Activated B cell treated with CpG ODN at 0.5 μM for 24 hours (primary cell): ENCODE measurements at regions of chr15 and their contacts with region 1.

Region 1: GRCh38 chr15:41331833-41332787 is at the start of gene OIP5:
- DNase-seq: peak; percentile 88
- ATAC-seq: peak; percentile 94
- H3K4me3 Mint-ChIP-seq: peak within 1 kb of the TSS; percentile 100
- H3K27ac Mint-ChIP-seq: peak within 1 kb of the TSS; percentile 97
- H3K4me1 Mint-ChIP-seq: peaks cover 31% of the 10 kb centered on the region
- H3K27me3 Mint-ChIP-seq: no peaks in the 10 kb centered on the region
- CTCF ChIP-seq: no peak
- total RNA-seq, gene OIP5: 0.62 and 1.4 TPM in 2 replicates

Region 2: GRCh38 chr15:41283653-41284426 is 48.3 kb before region 1 on chr15:
- CTCF ChIA-PET with region 1: interaction called, 7 read pairs
- POLR2A ChIA-PET with region 1: interaction called, 14 read pairs
- intact Hi-C with region 1: loop called (anchors 1 kb)
- DNase-seq: peak; percentile 94
- ATAC-seq: peak; percentile 98
- H3K4me3 Mint-ChIP-seq: peak overlapping the region; percentile 93
- H3K27ac Mint-ChIP-seq: peak overlapping the region; percentile 94
- H3K4me1 Mint-ChIP-seq: peaks cover 42% of the 10 kb centered on the region
- H3K27me3 Mint-ChIP-seq: no peaks in the 10 kb centered on the region
- CTCF ChIP-seq: no peak

Region 3: DNA sequence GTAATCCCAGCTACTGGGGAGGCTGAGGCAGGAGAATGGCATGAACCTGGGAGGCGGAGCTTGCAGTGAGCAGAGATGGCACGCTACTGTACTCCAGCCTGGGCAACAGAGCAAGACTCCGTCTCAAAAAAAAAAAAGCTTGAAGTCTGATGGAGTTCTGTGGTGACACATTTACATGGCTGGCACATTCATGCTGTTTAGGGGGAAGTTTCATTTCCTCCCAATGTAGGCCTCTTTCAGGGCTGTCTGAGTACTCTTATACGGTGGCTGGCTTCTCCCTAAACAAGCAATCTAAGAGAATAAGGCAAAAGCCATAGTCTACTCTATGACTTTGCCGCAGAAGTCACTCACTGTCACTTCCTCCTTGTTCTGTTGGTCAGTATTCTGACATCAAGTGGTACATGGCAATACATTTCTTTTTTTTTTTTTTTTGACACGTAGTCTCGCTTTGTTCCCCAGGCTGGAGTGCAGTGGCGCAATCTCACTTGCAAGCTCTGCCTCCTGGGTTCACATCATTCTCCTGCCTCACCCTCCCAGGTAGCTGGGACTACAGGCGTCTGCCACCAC is 41.0 kb before region 1 on chr15:
- CTCF ChIA-PET with region 1: interaction called, 7 read pairs
- POLR2A ChIA-PET with region 1: interaction called, 21 read pairs
- intact Hi-C with region 1: loop called (anchors 1 kb)
- DNase-seq: peak; percentile 25
- ATAC-seq: peak; percentile 94
- H3K4me3 Mint-ChIP-seq: peak overlapping the region; percentile 57
- H3K27ac Mint-ChIP-seq: peak overlapping the region; percentile 89
- H3K4me1 Mint-ChIP-seq: peaks cover 40% of the 10 kb centered on the region
- H3K27me3 Mint-ChIP-seq: no peaks in the 10 kb centered on the region
- CTCF ChIP-seq: no peak

Region 4: DNA sequence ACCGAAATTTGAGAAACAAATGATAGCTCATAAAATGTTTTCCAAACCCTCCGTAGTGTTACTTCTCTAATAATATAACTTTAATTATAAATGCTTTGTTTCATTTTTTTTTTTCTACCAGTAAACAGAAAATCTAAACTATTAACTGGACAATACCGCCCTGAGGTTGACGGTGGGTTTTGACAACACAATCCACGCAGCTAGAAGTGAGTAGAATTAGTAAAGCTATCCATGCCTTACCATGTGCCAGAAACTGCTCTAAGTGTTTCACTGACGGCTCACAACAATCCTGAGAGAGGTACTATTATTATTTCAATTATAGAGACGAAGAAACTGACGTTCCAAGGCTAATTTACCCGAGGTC is 69.8 kb after region 1 on chr15:
- CTCF ChIA-PET with region 1: no interaction called
- POLR2A ChIA-PET with region 1: interaction called, 3 read pairs
- intact Hi-C with region 1: loop called (anchors 1 kb)
- DNase-seq: no peak
- ATAC-seq: no peak
- H3K4me3 Mint-ChIP-seq: peak overlapping the region; percentile 93
- H3K27ac Mint-ChIP-seq: peak overlapping the region; percentile 94
- H3K4me1 Mint-ChIP-seq: peaks cover 16% of the 10 kb centered on the region
- H3K27me3 Mint-ChIP-seq: no peaks in the 10 kb centered on the region
- CTCF ChIP-seq: no peak

Region 5: DNA sequence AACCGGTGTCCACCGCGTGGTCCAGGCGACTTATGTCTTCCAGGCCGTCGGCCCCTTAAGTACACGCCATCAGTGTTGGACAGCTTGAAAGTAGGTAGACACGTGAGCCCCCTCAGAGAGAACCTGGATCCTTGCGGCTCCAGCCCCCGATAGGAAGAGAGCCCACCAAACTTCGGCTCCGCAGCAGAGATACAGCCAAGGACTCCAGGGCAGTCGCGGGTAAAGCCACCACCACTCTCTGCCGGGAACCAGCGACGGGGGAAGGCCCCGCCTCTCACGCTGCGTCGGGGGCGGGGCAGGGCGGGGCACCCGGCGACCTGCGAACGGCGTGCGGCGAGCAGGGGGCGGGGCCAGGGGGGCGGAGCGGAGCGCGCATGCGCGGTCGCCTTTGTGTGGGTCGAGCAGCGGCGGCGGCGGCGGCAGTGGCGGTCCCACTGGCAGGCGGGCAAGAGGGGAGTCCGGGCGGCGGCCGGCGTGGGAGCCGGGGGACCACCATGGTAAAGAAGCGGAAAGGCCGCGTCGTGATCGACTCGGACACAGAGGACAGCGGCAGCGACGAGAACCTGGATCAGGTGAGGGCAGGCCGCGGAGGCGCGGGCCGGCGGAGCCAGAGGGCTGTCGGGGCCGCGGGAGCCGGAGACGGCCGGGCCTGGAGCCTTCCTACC is 84.8 kb after region 1 on chr15 and contains the start of gene RTF1:
- CTCF ChIA-PET with region 1: no interaction called
- POLR2A ChIA-PET with region 1: no interaction called
- intact Hi-C with region 1: loop called (anchors 1 kb)
- DNase-seq: peak; percentile 100
- ATAC-seq: peak; percentile 96
- H3K4me3 Mint-ChIP-seq: peak within 1 kb of the TSS; percentile 95
- H3K27ac Mint-ChIP-seq: peak within 1 kb of the TSS; percentile 92
- H3K4me1 Mint-ChIP-seq: peaks cover 43% of the 10 kb centered on the region
- H3K27me3 Mint-ChIP-seq: no peaks in the 10 kb centered on the region
- CTCF ChIP-seq: no peak
- total RNA-seq, gene RTF1: 37.2 and 38.0 TPM in 2 replicates

Region 6: DNA sequence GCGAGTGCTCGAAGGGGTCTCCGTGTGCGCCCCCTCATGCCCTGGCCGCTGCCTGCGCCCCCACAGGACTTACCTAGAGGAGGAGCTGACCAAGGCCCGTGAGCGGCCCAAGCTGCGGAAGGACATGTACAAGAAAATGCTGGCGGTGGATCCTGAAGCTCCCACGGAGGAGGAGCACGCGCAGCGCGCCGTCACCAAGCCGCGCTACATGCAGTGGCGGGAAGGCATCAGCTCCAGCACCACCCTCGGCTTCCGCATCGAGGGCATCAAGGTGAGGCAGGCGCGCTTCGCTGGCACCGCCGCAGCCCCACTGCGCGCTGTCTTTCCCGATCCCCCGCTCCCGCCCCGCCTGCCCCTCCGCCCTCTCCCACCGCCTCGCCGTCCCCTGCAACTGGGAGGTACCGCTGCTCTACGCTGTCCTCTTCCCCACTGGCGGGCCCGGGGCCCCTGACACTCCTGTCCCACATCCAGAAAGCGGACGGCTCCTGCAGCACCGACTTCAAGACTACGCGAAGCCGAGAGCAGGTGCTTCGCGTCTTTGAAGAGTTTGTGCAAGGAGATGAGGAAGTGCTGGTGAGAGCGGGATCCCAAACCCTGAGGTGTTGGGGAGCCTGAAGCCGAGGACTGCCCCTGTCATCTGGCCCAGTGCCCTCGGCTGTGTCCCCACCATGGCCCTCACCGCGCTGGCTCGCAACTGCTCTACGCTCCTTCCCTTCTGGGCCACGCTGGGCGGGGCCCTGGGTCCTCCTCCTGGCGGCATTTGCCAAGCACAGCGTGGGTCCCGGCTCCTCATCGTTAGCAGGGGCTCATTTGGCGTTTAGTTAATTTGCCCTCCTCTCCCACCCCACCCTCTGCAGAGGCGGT is 170.1 kb after region 1 on chr15:
- CTCF ChIA-PET with region 1: no interaction called
- POLR2A ChIA-PET with region 1: no interaction called
- intact Hi-C with region 1: loop called (anchors 2 kb)
- DNase-seq: peak; percentile 35
- ATAC-seq: peak; percentile 40
- H3K4me3 Mint-ChIP-seq: peak overlapping the region; percentile 81
- H3K27ac Mint-ChIP-seq: no peak overlapping the region
- H3K4me1 Mint-ChIP-seq: peaks cover 38% of the 10 kb centered on the region
- H3K27me3 Mint-ChIP-seq: peaks cover 22% of the 10 kb centered on the region
- CTCF ChIP-seq: no peak

Region 7: DNA sequence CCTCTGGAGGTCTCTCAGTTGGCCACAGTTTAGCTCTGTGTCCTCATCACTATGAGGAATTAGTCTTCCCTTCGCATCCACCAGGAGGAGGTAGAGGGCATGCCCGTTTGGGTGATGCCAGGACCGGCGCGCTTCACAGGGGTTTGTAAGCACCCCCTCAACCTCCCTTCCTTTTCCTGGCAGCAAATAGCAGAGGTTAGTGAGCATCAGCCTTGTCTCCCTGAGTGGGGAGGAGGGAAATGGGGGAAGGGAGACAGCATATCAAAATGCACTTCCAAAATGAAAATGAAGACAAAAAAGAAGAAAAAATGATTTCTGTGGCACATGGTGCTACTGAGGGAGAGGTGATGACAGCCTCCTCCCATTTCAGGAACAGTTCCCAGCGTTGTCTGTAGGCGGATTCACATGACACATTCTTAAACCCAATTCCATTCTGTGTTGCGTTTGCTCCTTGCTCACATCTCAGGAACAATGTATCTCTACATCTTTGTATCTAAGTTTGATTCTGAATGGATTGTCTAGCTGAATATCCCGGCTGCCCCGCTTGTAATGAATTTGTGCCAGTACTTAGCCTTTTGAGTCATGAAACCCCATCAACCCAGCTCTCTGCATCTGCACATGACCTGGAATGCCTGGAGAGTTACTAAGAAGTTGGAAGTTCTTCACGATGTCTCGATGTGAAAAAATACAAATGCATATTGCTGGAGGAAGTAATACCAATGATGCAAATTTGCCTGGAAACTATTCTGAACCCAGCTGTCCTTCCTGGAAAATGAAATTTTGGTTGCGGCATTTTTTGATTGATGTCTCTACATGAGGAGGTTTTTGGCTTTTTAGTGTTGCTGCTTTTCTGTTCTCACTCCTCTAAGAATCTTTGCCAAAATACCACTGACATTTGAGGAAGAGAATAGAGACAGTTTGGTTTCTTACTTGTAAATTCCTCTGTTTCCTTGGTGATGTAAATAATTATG is 272.1 kb after region 1 on chr15:
- CTCF ChIA-PET with region 1: no interaction called
- POLR2A ChIA-PET with region 1: no interaction called
- intact Hi-C with region 1: no loop called
- DNase-seq: peak; percentile 25
- ATAC-seq: peak; percentile 96
- H3K4me3 Mint-ChIP-seq: peak overlapping the region; percentile 64
- H3K27ac Mint-ChIP-seq: no peak overlapping the region
- H3K4me1 Mint-ChIP-seq: peaks cover 10% of the 10 kb centered on the region
- H3K27me3 Mint-ChIP-seq: peaks cover 26% of the 10 kb centered on the region
- CTCF ChIP-seq: peak; percentile 13

Region 8: DNA sequence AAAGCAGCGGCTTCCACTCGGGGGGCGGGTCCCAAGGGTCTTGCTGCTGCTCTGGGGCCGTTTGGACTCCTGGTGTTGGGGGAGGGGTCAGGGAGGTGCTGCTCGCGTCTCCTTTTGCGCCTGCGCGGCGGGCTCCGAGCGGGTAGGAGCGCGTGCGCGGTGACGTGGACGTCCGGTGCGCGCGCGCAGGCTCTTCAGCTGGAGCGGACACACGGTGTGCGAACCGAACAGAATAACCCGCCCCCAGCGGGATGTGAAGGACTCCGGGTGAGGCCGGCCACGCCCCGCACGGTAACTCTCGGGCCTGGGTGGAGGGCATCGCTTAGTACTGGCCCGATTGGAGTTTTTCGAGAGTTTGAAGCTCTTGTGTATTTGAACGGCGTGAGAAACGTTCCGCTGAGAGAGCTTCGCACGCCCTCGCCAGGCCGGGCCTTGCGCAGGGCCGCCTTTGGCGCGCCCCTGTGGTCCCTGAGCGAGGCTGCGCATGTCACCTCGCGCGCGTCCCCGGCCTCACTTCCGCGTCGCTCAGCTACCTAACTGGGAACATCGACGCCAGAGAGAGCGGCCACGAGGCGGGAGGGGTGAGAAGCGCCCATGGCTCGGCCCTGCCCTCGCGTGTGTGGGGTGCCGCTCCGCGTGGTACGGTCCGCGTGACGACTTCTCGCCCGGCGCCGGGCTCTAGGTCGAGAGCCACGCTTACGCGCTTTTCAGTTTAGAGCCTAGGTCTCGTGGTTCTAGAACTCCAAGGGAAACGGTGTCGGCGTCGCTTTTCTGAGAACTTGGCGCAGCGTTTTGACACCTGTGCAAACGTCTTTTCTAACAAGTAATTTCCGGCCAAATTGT is 328.3 kb after region 1 on chr15 and contains the start of gene MGA:
- CTCF ChIA-PET with region 1: no interaction called
- POLR2A ChIA-PET with region 1: no interaction called
- intact Hi-C with region 1: loop called (anchors 2 kb)
- DNase-seq: peak; percentile 92
- ATAC-seq: peak; percentile 84
- H3K4me3 Mint-ChIP-seq: peak within 1 kb of the TSS; percentile 91
- H3K27ac Mint-ChIP-seq: peak within 1 kb of the TSS; percentile 91
- H3K4me1 Mint-ChIP-seq: peaks cover 51% of the 10 kb centered on the region
- H3K27me3 Mint-ChIP-seq: peaks cover 2% of the 10 kb centered on the region
- CTCF ChIP-seq: no peak
- total RNA-seq, gene MGA: 49.9 and 58.3 TPM in 2 replicates